OCI-LY7 (cell line): ENCODE measurements at regions of chr19 and their contacts with region 1.

Region 1: DNA sequence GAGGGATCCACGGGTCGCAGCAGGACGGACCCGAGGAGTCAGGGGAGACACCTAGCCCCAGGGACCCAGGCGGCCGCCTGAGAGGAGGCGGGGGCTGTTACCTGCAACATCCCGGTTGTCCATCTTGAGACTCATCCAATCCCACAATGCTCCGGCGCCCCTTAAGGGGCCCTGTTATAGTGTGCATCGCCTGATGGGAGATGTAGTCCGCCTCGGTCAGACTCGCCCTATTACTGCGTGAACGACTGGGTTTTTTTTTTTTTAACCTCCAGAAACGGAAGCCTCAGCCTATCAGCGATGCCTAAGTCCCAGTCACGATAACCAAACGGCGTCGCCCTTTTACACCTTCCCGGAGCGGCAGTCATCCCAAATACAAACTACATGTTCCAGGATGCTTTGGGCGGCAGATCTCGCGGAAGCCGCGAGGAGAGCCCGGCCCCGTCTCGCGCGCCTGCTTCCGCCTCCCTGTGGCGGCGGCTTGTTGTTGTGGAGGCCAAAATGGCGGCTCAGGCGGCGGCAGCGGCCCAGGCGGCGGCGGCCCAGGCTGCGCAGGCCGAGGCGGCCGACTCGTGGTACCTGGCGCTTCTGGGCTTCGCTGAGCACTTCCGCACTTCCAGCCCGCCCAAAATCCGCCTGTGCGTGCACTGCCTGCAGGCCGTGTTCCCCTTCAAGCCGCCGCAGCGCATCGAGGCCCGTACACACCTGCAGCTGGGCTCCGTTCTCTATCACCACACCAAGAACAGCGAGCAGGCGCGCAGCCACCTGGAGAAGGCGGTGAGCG is at the starts of genes MAU2 and SUGP1:
- DNase-seq: peak; percentile 95
- H3K4me3 ChIP-seq: peak within 1 kb of the TSS; percentile 86
- H3K27ac ChIP-seq: peak within 1 kb of the TSS; percentile 68
- H3K4me1 ChIP-seq: peaks cover 26% of the 10 kb centered on the region
- CTCF ChIP-seq: no peak
- total RNA-seq, gene MAU2: 31.9 and 58.7 TPM in 2 replicates
- total RNA-seq, gene SUGP1: 34.6 and 37.9 TPM in 2 replicates

Region 2: GRCh38 chr19:19155495-19156219 is 164.9 kb before region 1 on chr19:
- CTCF ChIA-PET with region 1: no interaction called
- POLR2A ChIA-PET with region 1: no interaction called
- intact Hi-C with region 1: loop called (anchors 1 kb)
- DNase-seq: peak; percentile 98
- H3K4me3 ChIP-seq: peak overlapping the region; percentile 59
- H3K27ac ChIP-seq: peak overlapping the region; percentile 98
- H3K4me1 ChIP-seq: peaks cover 96% of the 10 kb centered on the region
- CTCF ChIP-seq: no peak

Region 3: GRCh38 chr19:19203012-19203856 is 117.3 kb before region 1 on chr19 and contains the start of gene NR2C2AP:
- CTCF ChIA-PET with region 1: no interaction called
- POLR2A ChIA-PET with region 1: interaction called, 3 read pairs
- intact Hi-C with region 1: loop called (anchors 10 kb)
- DNase-seq: peak; percentile 95
- H3K4me3 ChIP-seq: peak within 1 kb of the TSS; percentile 92
- H3K27ac ChIP-seq: peak within 1 kb of the TSS; percentile 57
- H3K4me1 ChIP-seq: peaks cover 21% of the 10 kb centered on the region
- CTCF ChIP-seq: no peak
- total RNA-seq, gene NR2C2AP: 28.6 and 29.7 TPM in 2 replicates

Region 4: GRCh38 chr19:19956434-19957075 is 636.0 kb after region 1 on chr19:
- CTCF ChIA-PET with region 1: no interaction called
- POLR2A ChIA-PET with region 1: no interaction called
- intact Hi-C with region 1: no loop called
- DNase-seq: no peak
- H3K4me3 ChIP-seq: no peak overlapping the region
- H3K27ac ChIP-seq: no peak overlapping the region
- H3K4me1 ChIP-seq: no peaks in the 10 kb centered on the region
- CTCF ChIP-seq: no peak